Heart right ventricle (tissue), 16 donors: ENCODE measurements at regions of chr12 and their contacts with region 1.

Region 1: GRCh38 chr12:18332173-18332572 is 70.9 kb downstream of the PIK3C2G start:
- DNase-seq: peak in 1 of 2 donors; percentile 10
- ATAC-seq: peak in 6 of 8 donors; percentile 35 to 99 (median 68)
- H3K4me3 ChIP-seq: no peak overlapping the region
- H3K27ac ChIP-seq: no peak overlapping the region
- H3K4me1 ChIP-seq: peaks cover 0 to 4% (median 0%) of the 10 kb centered on the region in 9 donors
- H3K27me3 ChIP-seq: no peaks in the 10 kb centered on the region
- CTCF ChIP-seq: no peak

Region 2: DNA sequence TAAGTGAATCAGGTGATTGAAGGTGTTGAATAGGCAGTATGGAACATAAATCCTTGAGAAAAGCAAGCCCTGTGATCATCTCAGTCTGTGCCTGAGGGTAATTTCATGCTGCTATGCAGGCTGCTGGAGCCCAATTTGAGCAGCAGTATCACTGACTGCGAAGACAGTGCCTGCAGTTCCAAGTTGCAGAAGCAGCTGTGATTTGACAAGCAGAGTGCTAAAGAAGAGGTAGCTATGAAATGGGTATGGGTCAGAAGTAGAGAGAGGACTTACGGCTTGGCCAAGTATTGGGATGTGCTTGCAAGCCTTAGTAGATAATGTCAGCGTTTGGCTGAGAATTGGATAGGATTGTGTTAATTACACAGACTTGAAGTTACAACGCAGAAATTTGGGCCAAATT is 48.3 kb before region 1 on chr12:
- intact Hi-C with region 1: loop called in 1 of 10 experiments (anchors 1 kb)
- DNase-seq: no peak
- ATAC-seq: peak in 1 of 8 donors; percentile 29
- H3K4me3 ChIP-seq: no peak overlapping the region
- H3K27ac ChIP-seq: peak overlapping the region in 1 of 10 donors; percentile 34
- H3K4me1 ChIP-seq: no peaks in the 10 kb centered on the region
- H3K27me3 ChIP-seq: no peaks in the 10 kb centered on the region
- CTCF ChIP-seq: no peak